ENCODE measurements at regions of chr19 and their contacts with region 1.

Region 1: DNA sequence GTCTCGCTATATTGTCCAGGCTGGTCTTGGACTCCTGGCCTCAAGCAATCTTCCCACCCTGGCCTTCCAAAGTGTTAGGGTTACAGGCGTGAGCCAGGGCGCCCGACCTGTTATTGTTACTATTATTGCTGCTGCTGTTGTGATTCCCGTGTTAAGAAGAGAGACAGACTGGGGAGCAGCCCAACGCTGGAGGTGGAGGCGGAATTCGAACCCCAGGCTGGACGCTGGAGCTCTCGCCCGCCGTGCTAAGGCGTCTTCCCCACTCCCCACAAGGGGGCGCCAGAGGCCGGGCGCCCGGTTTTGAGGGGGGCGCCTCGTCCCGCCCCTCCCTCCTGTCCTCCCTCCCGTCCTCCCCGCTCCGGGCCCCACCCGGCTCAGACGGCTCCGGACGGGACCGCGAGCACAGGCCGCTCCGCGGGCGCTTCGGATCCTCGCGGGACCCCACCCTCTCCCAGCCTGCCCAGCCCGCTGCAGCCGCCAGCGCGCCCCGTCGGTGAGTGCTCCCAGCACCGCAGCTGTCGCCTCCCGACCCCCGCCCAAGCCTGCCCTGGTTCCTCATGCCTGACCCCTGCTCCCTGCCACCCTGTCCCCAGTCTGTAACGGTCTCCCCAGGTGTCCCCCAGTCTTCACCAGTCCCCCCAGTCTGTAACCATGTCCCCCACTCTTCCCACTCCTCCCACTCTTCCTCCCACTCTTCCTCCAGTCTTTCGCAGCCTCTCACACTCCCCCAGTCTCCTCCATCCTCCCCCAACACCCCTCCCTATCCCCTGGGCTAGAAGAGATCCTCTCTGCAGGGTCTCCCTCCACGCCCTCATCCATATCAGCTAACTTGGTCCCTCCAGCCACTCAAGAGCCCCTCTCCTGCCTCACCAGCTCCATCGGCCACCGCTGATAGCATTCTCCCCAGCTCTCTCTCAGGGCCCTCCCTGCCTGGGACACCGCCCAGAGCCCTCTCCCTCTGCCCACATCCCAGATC is at the start of gene EHD2:
- DNase-seq: peak; percentile 88
- H3K4me3 ChIP-seq: peak within 1 kb of the TSS; percentile 58 to 79
- H3K27ac ChIP-seq: peak within 1 kb of the TSS; percentile 30 to 67; a peak in 2 of 4 replicates
- H3K4me1 ChIP-seq: peaks cover 3 to 4% of the 10 kb centered on the region in 2 experiments; a peak in 3 of 4 replicates
- H3K27me3 ChIP-seq: no peaks in the 10 kb centered on the region
- CTCF ChIP-seq: peak; percentile 89
- EP300 ChIP-seq: peak in 1 of 2 experiments; percentile 36; a peak in 1 of 4 replicates
- RAD21 ChIP-seq: peak; percentile 82
- polyA plus RNA-seq, gene EHD2: 26.3 and 55.5 TPM in 2 replicates

Region 2: DNA sequence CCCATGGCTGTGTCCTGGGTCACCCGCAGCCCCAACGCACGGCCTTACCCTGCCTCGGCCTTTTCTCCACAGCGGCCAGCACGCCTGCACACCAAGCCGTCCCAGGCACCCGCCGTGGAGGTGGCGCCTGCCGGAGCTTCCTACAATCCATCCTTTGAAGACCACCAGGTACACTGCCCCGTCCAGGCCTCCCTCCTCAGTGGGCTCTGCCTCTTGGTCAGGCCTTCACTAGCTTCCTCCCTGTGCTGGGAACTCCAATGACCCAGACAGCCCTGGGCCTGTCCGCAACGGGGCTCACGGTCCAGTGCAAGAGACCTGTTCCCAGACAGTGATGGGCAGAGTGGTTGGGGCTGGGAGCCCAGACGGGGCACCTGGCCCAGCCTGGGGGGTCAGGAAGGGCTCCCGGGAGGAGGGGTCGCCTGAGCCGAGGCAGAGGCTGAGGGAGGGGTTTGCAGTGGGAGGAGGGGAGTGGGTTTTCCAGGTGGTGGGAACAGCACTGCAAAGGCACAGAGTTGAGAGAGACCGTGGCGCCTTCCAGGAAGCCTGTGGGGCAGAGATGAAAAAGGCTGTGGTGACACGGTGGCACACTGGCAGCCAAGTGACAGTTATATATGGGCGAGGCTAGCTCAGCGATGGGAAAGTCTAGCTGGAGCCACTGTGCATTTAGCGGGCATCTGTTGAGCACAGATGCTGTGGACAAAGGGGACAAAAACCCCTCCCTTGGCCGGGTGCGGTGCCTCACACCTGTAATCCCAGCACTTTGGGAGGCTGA is 39.3 kb after region 1 on chr19:
- CTCF ChIA-PET with region 1: interaction called, 475 read pairs
- POLR2A ChIA-PET with region 1: no interaction called
- DNase-seq: no peak
- H3K4me3 ChIP-seq: no peak overlapping the region
- H3K27ac ChIP-seq: no peak overlapping the region
- H3K4me1 ChIP-seq: no peaks in the 10 kb centered on the region; a peak in 1 of 4 replicates
- H3K27me3 ChIP-seq: no peaks in the 10 kb centered on the region
- CTCF ChIP-seq: no peak
- EP300 ChIP-seq: no peak
- RAD21 ChIP-seq: no peak

Region 3: GRCh38 chr19:47848823-47849473 is 135.6 kb after region 1 on chr19:
- CTCF ChIA-PET with region 1: no interaction called
- POLR2A ChIA-PET with region 1: no interaction called
- DNase-seq: peak; percentile 33
- H3K4me3 ChIP-seq: peak overlapping the region in 1 of 2 experiments; percentile 52; a peak in 1 of 4 replicates
- H3K27ac ChIP-seq: no peak overlapping the region
- H3K4me1 ChIP-seq: no peaks in the 10 kb centered on the region
- H3K27me3 ChIP-seq: peaks cover 73% of the 10 kb centered on the region
- CTCF ChIP-seq: peak; percentile 64
- EP300 ChIP-seq: no peak
- RAD21 ChIP-seq: no peak

Measured in SK-N-SH (cell line).